A673 (cell line): ENCODE measurements at regions of chr10 and their contacts with region 1.

Region 1: DNA sequence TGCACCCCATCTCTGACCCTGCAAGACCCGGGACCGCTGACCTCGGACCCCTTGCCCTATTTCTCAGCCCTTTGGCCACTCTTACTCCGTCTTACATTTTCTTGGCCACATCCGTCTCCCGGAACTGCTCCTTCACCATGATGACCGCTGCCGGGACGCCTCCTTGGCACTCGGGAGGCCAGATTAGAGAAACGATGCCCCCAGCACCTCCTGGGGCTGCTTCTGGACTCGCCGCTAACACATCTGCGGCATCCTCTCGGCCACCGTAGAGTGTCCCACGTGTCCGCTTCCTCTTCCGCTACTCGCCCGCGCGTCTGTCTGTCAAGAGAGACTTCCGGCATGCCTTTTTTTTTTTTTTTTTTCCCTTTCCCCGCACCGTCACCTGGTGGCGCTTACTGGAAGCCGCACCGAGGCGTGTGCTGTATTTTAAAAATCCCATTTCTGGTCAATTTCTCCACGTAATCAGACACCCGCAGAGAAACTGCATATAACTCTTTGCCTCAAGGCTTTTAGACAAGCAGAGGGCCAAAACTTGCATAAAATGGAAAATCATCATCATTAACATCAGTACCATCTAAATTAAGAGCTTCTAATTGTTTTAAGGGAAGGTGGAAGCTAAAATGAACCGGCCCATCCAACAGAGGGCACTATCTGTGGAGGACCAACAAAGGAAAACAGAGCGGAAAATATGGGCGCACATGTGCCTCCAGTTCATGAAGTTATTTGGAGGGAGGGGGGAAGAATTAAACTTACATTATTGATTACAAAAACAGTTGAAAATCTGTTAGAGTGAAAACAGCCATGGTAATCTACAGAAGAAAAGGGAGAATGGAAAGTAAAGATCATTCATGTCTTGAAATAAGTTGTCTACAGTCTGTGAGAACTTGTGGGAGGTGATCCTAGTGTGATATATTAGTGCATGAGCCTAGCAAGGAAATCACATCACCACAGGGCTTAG is at the start of gene POLR3A:
- DNase-seq: peak; percentile 98
- H3K4me3 ChIP-seq: peak within 1 kb of the TSS; percentile 96
- H3K27ac ChIP-seq: peak within 1 kb of the TSS; percentile 88
- H3K4me1 ChIP-seq: peaks cover 9% of the 10 kb centered on the region
- H3K27me3 ChIP-seq: no peaks in the 10 kb centered on the region
- CTCF ChIP-seq: peak; percentile 93
- total RNA-seq, gene POLR3A: 27.3 and 27.8 TPM in 2 replicates

Region 2: GRCh38 chr10:77609781-77610272 is 419.7 kb before region 1 on chr10:
- CTCF ChIA-PET with region 1: no interaction called
- POLR2A ChIA-PET with region 1: no interaction called
- intact Hi-C with region 1: no loop called
- DNase-seq: no peak
- H3K4me3 ChIP-seq: no peak overlapping the region
- H3K27ac ChIP-seq: no peak overlapping the region
- H3K4me1 ChIP-seq: no peaks in the 10 kb centered on the region
- H3K27me3 ChIP-seq: peaks cover 34% of the 10 kb centered on the region
- CTCF ChIP-seq: no peak

Region 3: DNA sequence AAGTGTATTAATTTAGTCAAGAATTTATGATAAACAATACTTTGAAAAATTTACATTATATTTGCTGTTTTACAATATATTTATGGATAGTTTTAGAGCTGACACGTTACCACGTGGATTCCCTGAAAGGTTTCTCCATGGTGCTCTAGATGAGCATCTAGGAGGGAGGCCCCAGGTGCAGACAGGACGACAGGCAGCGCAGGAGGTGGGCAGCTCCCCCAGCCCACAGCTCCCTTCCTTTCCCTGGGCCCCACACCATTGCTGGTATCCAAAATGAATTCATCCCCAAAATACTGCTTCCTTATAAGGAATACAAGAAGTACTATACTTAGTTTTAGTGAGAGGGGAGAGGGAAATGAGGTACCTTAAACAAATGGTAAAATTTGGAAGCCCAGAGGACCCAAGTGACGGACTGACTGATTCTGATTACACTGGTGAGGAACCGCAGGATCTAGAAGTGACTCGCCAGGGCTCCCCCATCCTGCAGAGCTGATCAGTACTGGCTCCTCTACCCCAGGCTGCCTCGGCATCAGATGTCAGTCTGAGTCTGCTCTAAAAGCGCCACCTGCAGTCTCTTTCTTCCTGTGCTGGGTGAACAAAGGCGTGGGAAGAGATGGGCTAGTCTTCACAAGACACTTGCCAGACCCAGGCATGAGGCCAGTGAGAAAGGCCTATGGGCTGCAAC is 192.2 kb before region 1 on chr10:
- CTCF ChIA-PET with region 1: no interaction called
- POLR2A ChIA-PET with region 1: no interaction called
- intact Hi-C with region 1: loop called (anchors 2 kb)
- DNase-seq: peak; percentile 83
- H3K4me3 ChIP-seq: no peak overlapping the region
- H3K27ac ChIP-seq: peak overlapping the region; percentile 79
- H3K4me1 ChIP-seq: peaks cover 28% of the 10 kb centered on the region
- H3K27me3 ChIP-seq: no peaks in the 10 kb centered on the region
- CTCF ChIP-seq: peak; percentile 68

Region 4: DNA sequence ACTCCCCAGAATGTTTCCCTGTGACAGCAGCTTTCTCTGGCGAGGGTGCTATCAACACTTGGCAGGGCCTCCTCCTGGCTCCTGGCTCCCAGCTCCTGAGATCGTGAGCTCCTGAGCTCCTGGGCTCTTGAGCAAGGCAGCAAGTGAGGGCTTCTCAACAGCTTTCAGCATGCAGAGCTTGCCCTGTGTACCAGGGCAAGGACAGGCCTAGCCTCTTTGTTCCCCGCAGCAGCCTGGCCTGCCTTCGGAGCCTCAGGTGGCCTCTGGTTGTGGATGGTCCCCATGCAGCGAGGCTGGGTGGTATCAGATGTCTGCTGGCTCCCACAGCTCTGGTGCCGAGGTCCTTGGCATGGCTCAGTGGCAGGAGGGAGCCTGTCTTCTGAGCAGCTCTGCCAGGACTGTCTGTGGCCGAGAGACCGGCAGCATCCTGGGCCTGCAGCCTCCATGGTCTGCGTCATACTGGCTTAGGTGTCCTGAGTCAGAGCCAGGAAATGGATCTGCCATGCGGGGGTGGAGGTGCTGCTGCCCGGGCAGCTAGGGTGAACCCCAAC is 1083.4 kb after region 1 on chr10:
- CTCF ChIA-PET with region 1: no interaction called
- POLR2A ChIA-PET with region 1: no interaction called
- intact Hi-C with region 1: no loop called
- DNase-seq: no peak
- H3K4me3 ChIP-seq: no peak overlapping the region
- H3K27ac ChIP-seq: peak overlapping the region; percentile 74
- H3K4me1 ChIP-seq: peaks cover 35% of the 10 kb centered on the region
- H3K27me3 ChIP-seq: no peaks in the 10 kb centered on the region
- CTCF ChIP-seq: no peak